ENCODE measurements at regions of chr10 and their contacts with region 1.

Region 1: GRCh38 chr10:97731346-97732051 is 5.4 kb upstream of the ZFYVE27 start:
- DNase-seq: peak in 1 of 2 donors; percentile 39
- ATAC-seq: peak; percentile 73 to 86 (median 78)
- H3K4me3 ChIP-seq: no peak overlapping the region
- H3K27ac ChIP-seq: no peak overlapping the region
- H3K4me1 ChIP-seq: no peaks in the 10 kb centered on the region
- H3K27me3 ChIP-seq: no peaks in the 10 kb centered on the region
- CTCF ChIP-seq: peak; percentile 87

Region 2: DNA sequence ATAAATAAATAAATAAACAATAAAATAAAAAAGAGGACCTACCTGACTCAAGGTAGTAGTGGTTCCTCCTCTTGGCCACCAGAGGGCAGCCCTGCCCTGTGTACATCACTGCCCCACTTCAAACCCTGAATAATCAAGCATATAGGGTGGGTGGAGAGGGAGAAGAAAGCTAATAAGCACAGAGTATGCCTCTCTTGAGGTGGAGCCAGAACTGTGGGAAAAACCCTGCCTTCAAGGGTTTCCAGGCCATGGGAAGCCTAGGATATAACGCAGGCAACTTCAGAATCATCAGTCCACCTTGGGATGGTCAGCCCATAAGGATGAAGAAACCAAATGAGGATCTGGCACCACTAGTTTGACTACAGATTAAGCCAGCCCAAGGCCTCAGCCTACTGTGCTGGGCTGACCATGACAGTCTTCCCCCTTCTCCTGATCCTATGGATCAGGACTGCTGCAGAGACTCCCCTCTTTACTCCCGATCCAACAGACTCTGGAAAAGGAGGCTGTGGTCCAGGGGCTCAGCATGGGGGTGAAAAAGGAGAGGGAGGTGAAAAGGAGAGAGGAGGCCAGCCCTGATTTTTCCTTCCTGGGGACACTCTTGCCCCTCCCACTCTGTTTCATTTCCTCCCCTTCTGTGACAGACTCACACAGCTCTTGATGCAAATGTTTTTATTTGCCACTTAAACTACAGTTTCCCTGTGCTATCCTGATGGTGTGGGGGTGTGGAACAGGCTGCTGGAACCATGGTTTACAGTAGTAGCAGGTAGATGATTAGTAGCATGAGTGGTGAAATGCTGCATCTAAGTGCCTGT is 54.5 kb before region 1 on chr10:
- intact Hi-C with region 1: loop called (anchors 1 to 5 kb)
- DNase-seq: no peak
- ATAC-seq: peak; percentile 70 to 84 (median 78)
- H3K4me3 ChIP-seq: no peak overlapping the region
- H3K27ac ChIP-seq: no peak overlapping the region
- H3K4me1 ChIP-seq: no peaks in the 10 kb centered on the region
- H3K27me3 ChIP-seq: no peaks in the 10 kb centered on the region
- CTCF ChIP-seq: peak; percentile 90

Region 3: DNA sequence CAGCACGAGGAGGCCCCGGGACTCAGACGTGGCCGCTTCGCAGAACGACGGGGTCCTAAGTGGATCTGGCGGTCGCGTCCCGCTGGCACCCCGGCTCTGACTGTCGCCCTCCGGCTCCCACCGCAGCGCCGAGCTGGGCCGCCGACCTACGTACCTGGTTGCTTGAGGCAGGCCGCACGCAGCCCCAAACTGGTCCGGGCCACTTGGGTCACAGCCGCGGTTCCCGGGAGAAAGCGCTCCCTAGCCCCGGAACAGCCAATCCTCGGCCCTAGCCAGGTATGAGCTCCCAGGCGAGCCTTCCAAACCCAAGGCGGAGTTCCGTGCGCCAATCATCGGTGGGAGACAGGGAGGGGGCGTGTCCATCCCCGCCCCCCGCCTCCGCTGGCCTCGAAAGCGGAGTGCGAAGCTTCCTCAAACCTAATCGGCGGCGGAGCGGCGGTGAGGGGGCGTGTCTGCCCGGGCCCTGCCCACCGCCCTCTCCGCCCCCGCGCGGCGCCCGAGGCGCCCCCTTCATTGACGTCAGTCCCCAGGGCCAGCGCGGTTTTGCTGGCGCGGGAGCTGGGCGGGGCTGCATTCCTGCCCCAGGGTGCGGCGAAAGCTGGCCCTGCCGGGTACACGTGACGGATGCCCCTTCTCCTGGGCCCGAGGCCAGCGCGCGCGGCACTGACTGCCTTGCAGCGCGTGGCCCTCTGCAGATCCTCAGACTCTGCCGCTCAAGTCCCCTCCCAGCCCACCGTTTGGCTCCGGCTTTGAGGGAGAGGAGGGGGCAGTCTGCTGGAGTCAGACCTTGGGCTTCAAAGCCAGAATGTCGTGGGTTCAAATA is 44.3 kb before region 1 on chr10 and contains the start of gene AVPI1:
- intact Hi-C with region 1: no loop called
- DNase-seq: peak; percentile 97 to 98
- ATAC-seq: peak; percentile 90 to 96 (median 93)
- H3K4me3 ChIP-seq: peak within 1 kb of the TSS; percentile 74
- H3K27ac ChIP-seq: peak within 1 kb of the TSS; percentile 81
- H3K4me1 ChIP-seq: peaks cover 37% of the 10 kb centered on the region
- H3K27me3 ChIP-seq: no peaks in the 10 kb centered on the region
- CTCF ChIP-seq: no peak
- total RNA-seq, gene AVPI1: 3.6 to 5.8 (median 5.0) TPM

Region 4: DNA sequence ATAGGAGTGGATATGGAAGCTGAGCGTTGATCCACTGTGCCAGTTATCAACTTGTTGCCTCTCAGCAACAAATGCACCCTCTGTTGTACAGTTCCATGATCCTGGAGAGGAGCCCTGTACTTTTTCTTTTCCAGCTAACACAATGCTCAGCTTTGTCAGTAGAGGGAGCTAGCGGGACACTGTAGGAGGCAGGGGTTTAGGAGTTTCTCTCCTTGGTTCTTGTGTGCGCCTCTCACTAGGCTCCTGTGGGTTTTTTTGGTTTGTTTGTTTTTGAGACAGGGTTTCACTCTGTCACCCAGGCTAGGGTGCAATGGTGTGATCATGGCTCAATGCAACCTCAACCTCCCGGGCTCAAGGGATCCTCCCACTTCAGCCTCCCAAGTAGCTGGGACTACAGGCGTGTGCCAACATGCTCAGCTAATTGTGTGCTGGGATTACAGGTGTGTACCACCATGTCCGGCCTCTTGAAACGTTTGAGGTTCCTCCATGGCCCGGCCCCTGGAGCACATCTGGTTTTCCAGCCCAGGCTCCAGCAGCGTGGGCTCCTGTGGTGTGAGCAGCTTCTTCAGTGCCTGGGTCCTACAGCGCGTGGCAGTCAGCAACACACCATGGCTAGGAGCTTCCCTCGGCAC is 29.9 kb before region 1 on chr10:
- intact Hi-C with region 1: loop called (anchors 2 to 5 kb)
- DNase-seq: no peak
- ATAC-seq: peak; percentile 81 to 92 (median 90)
- H3K4me3 ChIP-seq: no peak overlapping the region
- H3K27ac ChIP-seq: no peak overlapping the region
- H3K4me1 ChIP-seq: no peaks in the 10 kb centered on the region
- H3K27me3 ChIP-seq: no peaks in the 10 kb centered on the region
- CTCF ChIP-seq: peak; percentile 77

Region 5: DNA sequence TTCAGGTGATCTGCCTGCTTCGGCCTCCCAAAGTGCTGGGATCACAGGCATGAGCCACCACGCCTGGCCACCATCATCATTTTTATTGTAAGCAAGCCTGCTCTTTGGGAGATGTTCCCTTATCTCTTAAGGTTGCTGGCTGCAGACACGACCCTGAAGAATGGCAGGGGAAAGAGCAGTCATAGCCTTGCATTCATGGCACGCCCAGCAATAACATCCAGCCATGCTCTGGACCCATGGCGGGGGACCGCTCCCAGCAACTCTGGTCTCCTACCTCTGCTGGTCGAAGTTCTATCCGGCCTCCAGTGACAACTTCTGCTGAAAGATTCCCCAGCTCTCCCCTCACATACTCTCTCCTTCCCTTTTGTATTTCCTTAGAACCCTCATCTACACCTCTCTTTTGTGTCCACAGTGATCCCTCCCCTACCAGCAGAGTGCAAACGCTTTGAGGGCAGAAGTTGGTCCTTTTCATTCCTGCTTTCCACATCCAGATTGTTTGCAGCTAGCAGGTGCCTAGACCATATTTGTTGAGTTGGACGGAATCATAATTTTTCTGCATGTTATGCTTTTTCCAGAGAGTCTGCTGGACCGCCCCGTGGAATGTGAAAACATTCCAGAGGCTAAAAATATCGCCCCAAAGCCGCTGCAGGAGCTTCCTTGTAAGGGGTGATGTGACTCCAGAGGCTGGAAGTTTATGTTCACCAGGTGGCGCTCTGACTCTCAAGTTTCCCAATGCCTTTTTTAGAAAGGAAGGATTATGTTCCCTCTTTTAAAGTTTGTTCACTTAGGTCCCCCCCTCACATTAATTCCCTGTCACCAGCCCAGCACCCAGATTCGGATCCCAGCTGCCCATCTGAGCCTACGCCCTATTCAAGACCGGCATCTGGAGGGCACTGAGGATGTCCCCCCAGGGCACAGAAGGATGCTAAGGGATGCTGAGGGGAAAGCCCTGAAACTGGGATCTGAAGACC is 22.2 kb before region 1 on chr10:
- intact Hi-C with region 1: loop called (anchors 2 kb)
- DNase-seq: peak; percentile 62 to 65
- ATAC-seq: peak in 1 of 4 donors; percentile 26
- H3K4me3 ChIP-seq: no peak overlapping the region
- H3K27ac ChIP-seq: no peak overlapping the region
- H3K4me1 ChIP-seq: peaks cover 2% of the 10 kb centered on the region
- H3K27me3 ChIP-seq: peaks cover 0 to 6% (median 0%) of the 10 kb centered on the region in 3 donors
- CTCF ChIP-seq: peak; percentile 59

Measured in psoas muscle (tissue), 8 donors.